ENCODE measurements at regions of chr19 and their contacts with region 1.

Region 1: DNA sequence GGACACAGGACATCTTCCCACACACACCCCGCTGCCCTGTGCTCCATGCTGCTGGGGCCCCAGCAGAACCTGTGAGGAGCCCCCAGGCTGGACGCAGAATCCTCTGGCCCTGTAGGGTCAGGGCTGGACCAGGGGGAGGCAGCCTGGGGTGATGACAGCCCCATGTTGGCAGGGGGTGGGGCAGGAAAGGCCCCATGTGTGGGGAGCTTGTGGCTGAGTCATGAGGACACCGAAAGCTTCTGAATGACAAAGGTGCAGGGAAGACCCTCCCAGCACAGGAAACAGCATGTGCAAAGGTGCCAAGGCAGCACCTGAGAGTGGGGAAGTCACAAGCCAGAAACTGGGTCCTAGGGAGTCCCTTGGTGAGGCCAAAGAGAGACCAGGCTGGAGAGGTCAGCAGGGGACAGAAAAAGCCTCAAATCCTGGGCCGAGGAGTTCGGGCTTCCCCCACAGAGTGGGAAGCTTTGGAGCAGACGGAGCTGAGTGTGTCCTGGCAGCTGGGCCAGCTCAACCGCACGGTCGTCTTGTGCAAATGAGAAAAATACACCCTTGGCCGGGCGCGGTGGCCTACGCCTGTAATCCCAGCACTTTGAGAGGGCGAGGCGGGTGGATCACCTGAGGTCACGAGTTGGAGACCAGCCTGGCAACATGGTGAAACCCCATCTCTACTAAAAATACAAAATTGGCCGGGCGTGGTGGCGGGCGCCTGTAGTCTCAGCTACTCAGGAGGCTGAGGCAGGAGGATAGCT is 17.5 kb downstream of the ATP8B3 start:
- DNase-seq: no peak
- H3K4me3 ChIP-seq: no peak overlapping the region
- H3K27me3 ChIP-seq: no peaks in the 10 kb centered on the region
- CTCF ChIP-seq: no peak

Region 2: GRCh38 chr19:1540365-1540925 is 254.2 kb before region 1 on chr19:
- CTCF ChIA-PET with region 1: interaction called, 40 read pairs
- POLR2A ChIA-PET with region 1: no interaction called
- DNase-seq: no peak
- H3K4me3 ChIP-seq: no peak overlapping the region
- H3K27me3 ChIP-seq: peaks cover 4% of the 10 kb centered on the region
- CTCF ChIP-seq: no peak

Region 3: GRCh38 chr19:1773173-1773572 is 21.4 kb before region 1 on chr19:
- CTCF ChIA-PET with region 1: interaction called, 12 read pairs
- POLR2A ChIA-PET with region 1: no interaction called
- DNase-seq: peak; percentile 17
- H3K4me3 ChIP-seq: no peak overlapping the region
- H3K27me3 ChIP-seq: peaks cover 27% of the 10 kb centered on the region
- CTCF ChIP-seq: no peak

Region 4: GRCh38 chr19:1780272-1780958 is 14.2 kb before region 1 on chr19:
- CTCF ChIA-PET with region 1: interaction called, 19 read pairs
- POLR2A ChIA-PET with region 1: no interaction called
- DNase-seq: no peak
- H3K4me3 ChIP-seq: no peak overlapping the region
- H3K27me3 ChIP-seq: peaks cover 28% of the 10 kb centered on the region
- CTCF ChIP-seq: peak; percentile 42; the same call in 1 of the 2 replicates

Region 5: GRCh38 chr19:1825909-1826556 is 31.4 kb after region 1 on chr19:
- CTCF ChIA-PET with region 1: interaction called, 11 read pairs
- POLR2A ChIA-PET with region 1: no interaction called
- DNase-seq: no peak
- H3K4me3 ChIP-seq: no peak overlapping the region
- H3K27me3 ChIP-seq: no peaks in the 10 kb centered on the region
- CTCF ChIP-seq: peak; percentile 93

Region 6: GRCh38 chr19:1875646-1876495 is 81.3 kb after region 1 on chr19:
- CTCF ChIA-PET with region 1: no interaction called
- POLR2A ChIA-PET with region 1: no interaction called
- DNase-seq: no peak
- H3K4me3 ChIP-seq: peak overlapping the region; percentile 63
- H3K27me3 ChIP-seq: no peaks in the 10 kb centered on the region
- CTCF ChIP-seq: no peak